ENCODE measurements at regions of chr9 and their contacts with region 1.

Region 1: GRCh38 chr9:109119439-109120203 is at the start of gene TMEM245:
- DNase-seq: peak; percentile 98
- ATAC-seq: peak; percentile 90
- H3K4me3 ChIP-seq: peak within 1 kb of the TSS; percentile 91 to 96 (median 95)
- H3K27ac ChIP-seq: peak within 1 kb of the TSS; percentile 77
- H3K4me1 ChIP-seq: peaks cover 81% of the 10 kb centered on the region
- H3K27me3 ChIP-seq: no peaks in the 10 kb centered on the region
- CTCF ChIP-seq: peak; percentile 0; the same call in 1 of the 2 replicates
- EP300 ChIP-seq: 0 out of 4 replicates have a peak, but pooled peaks of 1 of the 2 experiments have one; percentile 11
- POLR2A ChIP-seq: peak; percentile 66 to 74
- RAD21 ChIP-seq: 0 out of 2 replicates have a peak, but pooled peaks have one; percentile 22
- total RNA-seq, gene TMEM245: 39.7 and 55.4 TPM in 2 replicates

Region 2: DNA sequence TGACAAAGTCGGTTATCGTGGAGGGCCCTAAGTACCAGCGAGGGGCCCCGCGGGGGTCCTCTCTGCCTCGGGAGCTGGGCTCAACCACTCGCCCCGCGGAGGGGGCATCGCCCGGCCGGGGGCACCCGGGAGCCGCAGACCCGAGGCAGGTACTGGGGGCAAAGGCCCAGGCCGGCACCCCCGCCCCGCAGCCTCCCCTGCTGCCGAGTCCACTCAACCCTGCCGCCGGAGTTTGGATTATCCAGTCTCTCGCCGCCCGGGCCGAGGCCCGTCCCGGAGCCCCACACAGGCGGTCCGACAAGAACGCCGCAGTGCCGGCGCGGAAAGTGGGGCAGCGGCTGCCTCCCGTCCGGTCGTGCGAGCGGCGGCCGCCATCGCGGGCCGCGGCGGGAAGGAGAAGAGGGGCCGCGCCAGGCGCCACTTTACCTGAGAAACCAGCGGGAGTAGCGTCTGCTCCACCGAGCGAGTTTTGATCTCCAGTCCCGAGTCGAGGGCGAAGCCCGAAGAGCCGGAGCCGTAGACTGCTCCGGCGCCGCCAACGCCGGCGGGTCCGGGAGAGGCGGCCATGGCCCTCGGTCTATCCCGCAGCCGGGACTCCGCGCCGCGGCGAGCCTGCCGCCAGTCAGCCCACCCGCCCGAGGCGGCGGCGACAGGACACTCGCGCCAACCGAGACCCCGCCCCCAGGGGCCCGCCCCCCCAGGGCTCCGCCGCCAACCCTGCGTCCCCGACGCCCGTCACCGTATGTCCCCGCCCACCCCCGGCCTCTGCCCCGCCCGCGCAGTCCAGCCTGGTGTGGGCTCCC is 106.5 kb before region 1 on chr9 and contains the start of gene CTNNAL1:
- CTCF ChIA-PET with region 1: no interaction called
- POLR2A ChIA-PET with region 1: no interaction called
- in situ Hi-C with region 1: no loop called
- intact Hi-C with region 1: loop called (anchors 5 kb)
- DNase-seq: peak; percentile 82
- ATAC-seq: peak; percentile 88
- H3K4me3 ChIP-seq: peak within 1 kb of the TSS; percentile 81 to 95 (median 90)
- H3K27ac ChIP-seq: peak within 1 kb of the TSS; percentile 86
- H3K4me1 ChIP-seq: peaks cover 47% of the 10 kb centered on the region
- H3K27me3 ChIP-seq: no peaks in the 10 kb centered on the region; a peak in 1 of 5 replicates
- CTCF ChIP-seq: no peak
- EP300 ChIP-seq: no peak
- POLR2A ChIP-seq: peak; percentile 83 to 89
- RAD21 ChIP-seq: peak; percentile 30; the same call in 1 of the 2 replicates
- total RNA-seq, gene CTNNAL1: 162 and 227 TPM in 2 replicates

Region 3: DNA sequence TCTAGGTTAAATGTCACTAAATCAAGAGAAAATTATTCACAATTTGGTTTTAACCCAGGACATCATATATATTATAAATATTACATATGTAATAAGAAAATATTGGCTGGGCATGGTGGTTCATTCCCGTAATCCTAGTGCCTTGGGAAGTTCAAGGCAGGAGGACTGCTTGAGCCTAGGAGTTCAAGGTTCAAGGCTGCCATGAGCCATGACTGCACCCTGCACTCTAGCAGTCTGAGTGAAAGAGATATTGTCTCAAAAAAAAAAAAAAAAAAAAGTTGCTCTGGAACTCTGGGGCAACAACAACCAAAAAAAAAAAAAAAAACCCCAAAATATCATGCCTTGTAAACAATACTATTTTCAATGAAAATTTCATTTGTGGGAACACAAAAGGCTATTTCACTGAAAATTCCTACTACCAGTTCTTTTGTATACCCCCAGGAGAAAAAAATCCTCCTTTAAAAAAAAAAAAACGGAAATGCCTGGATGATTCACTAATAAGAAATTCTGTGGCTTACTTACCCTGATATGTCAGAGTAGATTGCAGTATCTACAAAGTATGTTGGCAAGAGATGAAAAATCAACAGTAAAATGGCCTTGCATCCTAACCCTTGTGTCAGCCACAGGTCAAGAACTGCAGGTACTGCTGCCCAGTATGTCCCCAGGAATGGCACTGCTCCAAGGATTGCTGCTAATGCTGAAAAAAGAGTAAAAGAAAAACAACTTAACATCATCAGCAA is 83.8 kb before region 1 on chr9:
- CTCF ChIA-PET with region 1: no interaction called
- POLR2A ChIA-PET with region 1: interaction called, 3 read pairs
- in situ Hi-C with region 1: no loop called
- intact Hi-C with region 1: loop called (anchors 10 kb)
- DNase-seq: peak; percentile 90
- ATAC-seq: peak; percentile 86
- H3K4me3 ChIP-seq: no peak overlapping the region
- H3K27ac ChIP-seq: peak overlapping the region; percentile 63
- H3K4me1 ChIP-seq: peaks cover 46% of the 10 kb centered on the region
- H3K27me3 ChIP-seq: no peaks in the 10 kb centered on the region
- CTCF ChIP-seq: no peak
- EP300 ChIP-seq: peak in 1 of 2 experiments; percentile 79; a peak in 2 of 4 replicates
- POLR2A ChIP-seq: no peak
- RAD21 ChIP-seq: no peak

Region 4: GRCh38 chr9:109072128-109072692 is 47.4 kb before region 1 on chr9:
- CTCF ChIA-PET with region 1: no interaction called
- POLR2A ChIA-PET with region 1: no interaction called
- in situ Hi-C with region 1: no loop called
- intact Hi-C with region 1: no loop called
- DNase-seq: peak; percentile 47
- ATAC-seq: peak; percentile 60
- H3K4me3 ChIP-seq: no peak overlapping the region
- H3K27ac ChIP-seq: peak overlapping the region; percentile 8
- H3K4me1 ChIP-seq: peaks cover 47% of the 10 kb centered on the region
- H3K27me3 ChIP-seq: no peaks in the 10 kb centered on the region
- CTCF ChIP-seq: no peak
- EP300 ChIP-seq: no peak
- POLR2A ChIP-seq: no peak
- RAD21 ChIP-seq: no peak

Region 5: GRCh38 chr9:109132567-109133021 is 13.0 kb after region 1 on chr9:
- CTCF ChIA-PET with region 1: no interaction called
- POLR2A ChIA-PET with region 1: interaction called, 10 read pairs
- in situ Hi-C with region 1: no loop called
- intact Hi-C with region 1: no loop called
- DNase-seq: peak; percentile 19
- ATAC-seq: peak; percentile 77
- H3K4me3 ChIP-seq: peak overlapping the region; percentile 50 to 60 (median 59); a peak in 5 of 6 replicates
- H3K27ac ChIP-seq: peak overlapping the region; percentile 69
- H3K4me1 ChIP-seq: peaks cover 61% of the 10 kb centered on the region
- H3K27me3 ChIP-seq: no peaks in the 10 kb centered on the region
- CTCF ChIP-seq: peak; percentile 53
- EP300 ChIP-seq: no peak
- POLR2A ChIP-seq: no peak
- RAD21 ChIP-seq: no peak